ENCODE measurements at regions of chr1 and their contacts with region 1.

Region 1: GRCh38 chr1:164914208-164914607 is 355.2 kb downstream of the PBX1 start:
- DNase-seq: peak; percentile 57
- ATAC-seq: peak; percentile 75
- H3K4me3 ChIP-seq: no peak overlapping the region
- H3K27ac ChIP-seq: no peak overlapping the region
- H3K4me1 ChIP-seq: no peaks in the 10 kb centered on the region
- H3K27me3 ChIP-seq: peaks cover 2% of the 10 kb centered on the region
- CTCF ChIP-seq: peak; percentile 55
- POLR2A ChIP-seq: no peak
- RAD21 ChIP-seq: peak; percentile 60

Region 2: GRCh38 chr1:163410073-163410999 is 1503.9 kb before region 1 on chr1:
- CTCF ChIA-PET with region 1: no interaction called
- POLR2A ChIA-PET with region 1: no interaction called
- dilution Hi-C with region 1: no loop called
- in situ Hi-C with region 1: no loop called
- intact Hi-C with region 1: loop called (anchors 5 kb)
- DNase-seq: peak; percentile 56
- ATAC-seq: peak; percentile 81
- H3K4me3 ChIP-seq: no peak overlapping the region
- H3K27ac ChIP-seq: no peak overlapping the region
- H3K4me1 ChIP-seq: no peaks in the 10 kb centered on the region
- H3K27me3 ChIP-seq: peaks cover 5% of the 10 kb centered on the region
- CTCF ChIP-seq: peak; percentile 75
- POLR2A ChIP-seq: no peak
- RAD21 ChIP-seq: peak; percentile 72

Region 3: DNA sequence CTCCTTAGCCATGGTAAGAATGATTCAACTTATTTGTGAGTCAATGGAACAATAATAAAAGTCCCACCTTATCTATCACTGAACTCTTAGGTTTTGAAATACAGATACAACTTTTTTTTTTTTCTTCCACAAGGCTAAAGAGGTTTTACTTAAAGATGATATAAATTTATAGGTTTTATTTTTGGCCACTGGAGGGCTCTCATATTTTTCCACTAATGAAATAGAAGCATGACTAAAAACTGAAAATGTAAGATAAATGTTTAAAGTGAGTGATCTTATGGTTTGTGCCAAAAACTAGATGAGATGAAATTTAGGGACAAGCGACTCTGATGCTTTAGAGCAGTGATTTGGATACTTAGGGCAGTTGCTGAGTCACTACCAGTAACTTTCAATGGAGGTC is 1093.4 kb before region 1 on chr1:
- CTCF ChIA-PET with region 1: no interaction called
- POLR2A ChIA-PET with region 1: no interaction called
- dilution Hi-C with region 1: no loop called
- in situ Hi-C with region 1: no loop called
- intact Hi-C with region 1: loop called (anchors 10 kb)
- DNase-seq: no peak
- ATAC-seq: no peak
- H3K4me3 ChIP-seq: no peak overlapping the region
- H3K27ac ChIP-seq: no peak overlapping the region
- H3K4me1 ChIP-seq: no peaks in the 10 kb centered on the region
- H3K27me3 ChIP-seq: no peaks in the 10 kb centered on the region
- CTCF ChIP-seq: no peak
- POLR2A ChIP-seq: no peak
- RAD21 ChIP-seq: no peak

Region 4: GRCh38 chr1:163885510-163885909 is 1028.7 kb before region 1 on chr1:
- CTCF ChIA-PET with region 1: no interaction called
- POLR2A ChIA-PET with region 1: no interaction called
- dilution Hi-C with region 1: no loop called
- in situ Hi-C with region 1: no loop called
- intact Hi-C with region 1: loop called (anchors 10 kb)
- DNase-seq: no peak
- ATAC-seq: no peak
- H3K4me3 ChIP-seq: no peak overlapping the region
- H3K27ac ChIP-seq: no peak overlapping the region
- H3K4me1 ChIP-seq: no peaks in the 10 kb centered on the region
- H3K27me3 ChIP-seq: no peaks in the 10 kb centered on the region
- CTCF ChIP-seq: no peak
- POLR2A ChIP-seq: no peak
- RAD21 ChIP-seq: no peak